Right lobe of liver (tissue), 6 donors: ENCODE measurements at regions of chr3 and their contacts with region 1.

Region 1: GRCh38 chr3:159804726-159805410 is 183.8 kb upstream of the IL12A start:
- DNase-seq: peak in 2 of 3 donors; percentile 27 to 70
- ATAC-seq: peak; percentile 94 to 98 (median 97)
- H3K4me3 ChIP-seq: no peak overlapping the region
- H3K27ac ChIP-seq: no peak overlapping the region
- H3K4me1 ChIP-seq: peaks cover 0 to 16% (median 5%) of the 10 kb centered on the region in 4 donors
- H3K27me3 ChIP-seq: no peaks in the 10 kb centered on the region
- CTCF ChIP-seq: peak; percentile 75 to 87 (median 84)
- POLR2A ChIP-seq: no peak

Region 2: DNA sequence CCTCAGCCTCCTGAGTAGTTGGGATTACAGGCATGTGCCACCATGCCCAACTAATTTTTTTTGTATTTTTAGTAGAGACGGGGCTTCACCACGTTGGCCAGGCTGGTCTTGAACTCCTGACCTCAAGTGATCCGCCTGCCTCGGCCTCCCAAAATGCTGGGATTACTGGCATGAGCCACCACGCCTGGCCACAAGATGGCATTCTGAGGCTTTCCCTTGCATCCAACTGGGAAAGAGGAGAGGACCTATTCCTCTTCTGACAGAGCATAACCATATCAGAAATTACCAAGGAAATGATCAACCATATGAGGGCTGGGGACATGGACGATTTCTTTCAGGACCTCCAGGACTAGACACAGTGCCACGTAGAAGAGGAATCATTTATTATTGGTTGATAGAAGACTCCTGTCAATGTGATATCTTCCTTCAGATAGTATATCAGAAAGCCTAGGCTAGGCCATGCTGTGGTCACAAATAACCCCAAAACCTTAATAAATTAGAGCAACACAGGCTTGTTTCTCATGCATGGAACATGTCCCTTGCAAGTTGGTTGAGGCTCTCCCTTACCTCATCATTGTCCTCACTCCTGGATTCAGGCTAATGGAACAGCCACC is 188.5 kb before region 1 on chr3:
- intact Hi-C with region 1: loop called (anchors 5 to 10 kb)
- DNase-seq: peak; percentile 54 to 67 (median 65)
- ATAC-seq: peak; percentile 91 to 95 (median 93)
- H3K4me3 ChIP-seq: no peak overlapping the region
- H3K27ac ChIP-seq: no peak overlapping the region
- H3K4me1 ChIP-seq: peaks cover 0 to 2% (median under 1%) of the 10 kb centered on the region in 4 donors
- H3K27me3 ChIP-seq: no peaks in the 10 kb centered on the region
- CTCF ChIP-seq: peak; percentile 65 to 86 (median 76)
- POLR2A ChIP-seq: no peak

Region 3: DNA sequence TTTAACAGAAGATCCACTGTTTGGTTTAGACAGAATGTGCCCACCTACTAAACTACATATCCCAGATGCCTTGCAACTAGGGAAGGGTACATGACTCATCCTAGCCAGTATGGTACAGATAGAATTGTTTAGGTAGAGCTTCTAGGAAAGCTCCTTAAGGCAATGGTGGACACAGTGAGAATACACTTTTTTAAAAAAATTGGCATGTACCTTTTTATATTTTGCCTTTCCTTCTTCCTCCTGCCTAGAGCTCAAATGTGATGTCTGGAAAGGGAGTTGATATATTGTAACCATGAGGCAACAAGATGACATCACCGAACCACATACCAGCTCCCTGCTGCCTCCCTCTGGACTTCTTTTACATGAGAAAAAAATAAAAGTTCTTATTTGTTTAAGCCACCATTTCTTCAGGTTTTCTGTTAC is 405.9 kb after region 1 on chr3:
- intact Hi-C with region 1: no loop called
- DNase-seq: no peak
- ATAC-seq: peak in 2 of 4 donors; percentile 37 to 74
- H3K4me3 ChIP-seq: no peak overlapping the region
- H3K27ac ChIP-seq: no peak overlapping the region
- H3K4me1 ChIP-seq: no peaks in the 10 kb centered on the region
- H3K27me3 ChIP-seq: no peaks in the 10 kb centered on the region
- CTCF ChIP-seq: peak in 1 of 4 donors; percentile 22
- POLR2A ChIP-seq: no peak